CD8-positive, alpha-beta memory T cell (primary cell): ENCODE measurements at regions of chr2 and their contacts with region 1.

Region 1: DNA sequence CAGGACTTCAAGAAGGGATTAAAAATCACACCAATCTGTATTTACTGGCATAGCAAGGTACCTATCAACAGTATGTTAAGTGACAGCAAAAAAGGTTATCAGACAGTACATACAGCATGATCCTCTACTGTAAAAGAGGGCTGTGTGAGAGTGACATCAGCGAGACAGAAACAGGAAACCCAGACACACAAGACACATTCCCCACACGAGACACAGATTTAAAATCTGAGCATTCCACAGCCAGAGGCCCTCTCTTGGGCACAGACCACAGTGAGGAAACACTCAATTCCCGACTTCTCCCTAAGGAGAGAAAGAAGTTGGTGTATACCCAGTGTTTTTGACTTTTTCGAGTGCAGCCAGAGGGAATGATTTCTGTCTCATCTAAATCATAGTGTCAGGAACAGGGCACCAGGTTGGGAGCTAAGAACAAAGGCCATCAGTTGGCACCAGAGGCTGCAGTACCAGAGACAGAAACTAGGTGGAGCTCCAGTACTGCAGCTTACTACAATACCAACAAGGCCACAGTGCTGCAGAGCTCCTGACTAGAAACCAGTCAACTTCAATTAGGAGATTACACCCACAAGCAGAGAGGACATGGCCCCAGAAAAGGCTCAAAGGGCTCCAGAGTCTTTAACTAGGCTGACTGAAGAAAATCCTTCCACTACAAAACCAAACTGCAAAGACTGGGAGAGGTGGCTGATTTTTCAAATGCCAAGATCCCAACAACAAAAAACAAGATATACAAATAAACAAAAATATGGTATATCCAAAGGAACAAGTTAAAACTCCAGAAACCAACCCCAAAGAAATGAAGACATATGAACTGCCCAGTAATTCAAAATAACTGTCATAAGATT is 41.0 kb downstream of the UNC50 start:
- DNase-seq: peak; percentile 70 to 82 (median 74)
- H3K4me3 ChIP-seq: no peak overlapping the region
- H3K4me3 Mint-ChIP-seq: peak overlapping the region; percentile 3 to 57 (median 12)
- H3K27ac ChIP-seq: no peak overlapping the region
- H3K27ac Mint-ChIP-seq: peak overlapping the region; percentile 55 to 98 (median 86)
- H3K4me1 ChIP-seq: peaks cover 44% of the 10 kb centered on the region
- H3K4me1 Mint-ChIP-seq: peaks cover 50 to 79% (median 57%) of the 10 kb centered on the region in 3 donors
- H3K27me3 ChIP-seq: no peaks in the 10 kb centered on the region
- H3K27me3 Mint-ChIP-seq: no peaks in the 10 kb centered on the region

Region 2: DNA sequence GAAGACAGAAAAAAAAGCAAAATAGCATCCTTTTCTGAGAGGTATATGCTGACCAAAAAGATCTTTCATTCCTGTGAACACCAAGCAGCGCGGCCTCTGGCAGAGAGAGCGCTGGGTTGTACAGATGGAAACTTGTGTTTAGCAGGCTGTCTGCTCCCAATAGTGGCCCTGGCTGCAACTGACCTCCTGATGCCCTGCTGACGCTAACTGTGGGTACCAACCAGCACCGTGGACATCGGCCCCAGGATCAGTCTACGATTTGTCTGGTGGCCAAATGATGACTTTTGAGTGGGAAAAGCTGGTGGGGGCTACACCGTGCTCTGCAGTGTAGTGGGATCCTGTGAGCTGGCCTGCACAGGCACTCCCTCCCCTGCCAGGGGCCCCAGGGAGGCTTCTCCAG is 56.8 kb before region 1 on chr2:
- CTCF ChIA-PET with region 1: no interaction called
- POLR2A ChIA-PET with region 1: no interaction called
- DNase-seq: no peak
- H3K4me3 ChIP-seq: no peak overlapping the region
- H3K4me3 Mint-ChIP-seq: no peak overlapping the region
- H3K27ac ChIP-seq: no peak overlapping the region
- H3K27ac Mint-ChIP-seq: no peak overlapping the region
- H3K4me1 ChIP-seq: no peaks in the 10 kb centered on the region
- H3K4me1 Mint-ChIP-seq: peaks cover 14 to 21% (median 16%) of the 10 kb centered on the region in 3 donors
- H3K27me3 ChIP-seq: no peaks in the 10 kb centered on the region
- H3K27me3 Mint-ChIP-seq: no peaks in the 10 kb centered on the region

Region 3: DNA sequence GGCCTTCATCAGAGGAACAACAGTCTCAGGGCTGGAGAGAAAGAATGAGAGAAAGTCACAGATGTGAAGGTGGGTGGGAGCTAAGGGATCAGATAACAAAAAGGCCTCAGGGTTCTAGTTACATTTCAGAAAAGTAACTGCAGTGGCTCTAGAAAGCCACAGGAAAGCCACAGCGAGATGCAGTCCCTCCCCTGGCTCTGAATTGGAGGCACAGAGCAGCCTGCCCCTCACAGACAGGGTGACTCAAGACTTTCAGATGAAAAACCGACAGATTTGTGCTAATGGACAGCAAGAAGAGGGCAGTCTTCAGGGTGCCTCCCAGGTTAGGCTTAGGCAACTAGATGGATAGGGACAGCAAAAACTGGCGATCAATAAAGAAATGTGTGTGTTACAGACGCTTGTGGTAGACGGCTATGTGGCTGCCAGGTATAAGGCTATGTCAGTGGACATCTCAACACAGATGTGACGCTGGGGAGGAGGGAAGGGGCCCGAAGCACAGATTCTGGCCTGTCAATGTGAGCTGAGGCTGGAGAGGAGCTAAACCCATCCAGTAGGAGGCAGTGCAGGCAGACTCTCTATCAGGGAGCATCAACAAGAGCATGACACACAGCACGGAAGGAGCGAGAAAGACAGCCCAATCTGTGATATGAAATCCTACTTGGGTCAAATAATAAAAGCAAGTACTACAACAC is 14.8 kb before region 1 on chr2:
- CTCF ChIA-PET with region 1: interaction called, 10 read pairs
- POLR2A ChIA-PET with region 1: no interaction called
- DNase-seq: peak in 4 of 5 donors; percentile 31 to 70 (median 39)
- H3K4me3 ChIP-seq: no peak overlapping the region
- H3K4me3 Mint-ChIP-seq: peak overlapping the region; percentile 8 to 90 (median 76)
- H3K27ac ChIP-seq: peak overlapping the region; percentile 39
- H3K27ac Mint-ChIP-seq: peak overlapping the region; percentile 86 to 100 (median 98)
- H3K4me1 ChIP-seq: peaks cover 44% of the 10 kb centered on the region
- H3K4me1 Mint-ChIP-seq: peaks cover 46 to 61% (median 55%) of the 10 kb centered on the region in 3 donors
- H3K27me3 ChIP-seq: no peaks in the 10 kb centered on the region
- H3K27me3 Mint-ChIP-seq: no peaks in the 10 kb centered on the region

Region 4: DNA sequence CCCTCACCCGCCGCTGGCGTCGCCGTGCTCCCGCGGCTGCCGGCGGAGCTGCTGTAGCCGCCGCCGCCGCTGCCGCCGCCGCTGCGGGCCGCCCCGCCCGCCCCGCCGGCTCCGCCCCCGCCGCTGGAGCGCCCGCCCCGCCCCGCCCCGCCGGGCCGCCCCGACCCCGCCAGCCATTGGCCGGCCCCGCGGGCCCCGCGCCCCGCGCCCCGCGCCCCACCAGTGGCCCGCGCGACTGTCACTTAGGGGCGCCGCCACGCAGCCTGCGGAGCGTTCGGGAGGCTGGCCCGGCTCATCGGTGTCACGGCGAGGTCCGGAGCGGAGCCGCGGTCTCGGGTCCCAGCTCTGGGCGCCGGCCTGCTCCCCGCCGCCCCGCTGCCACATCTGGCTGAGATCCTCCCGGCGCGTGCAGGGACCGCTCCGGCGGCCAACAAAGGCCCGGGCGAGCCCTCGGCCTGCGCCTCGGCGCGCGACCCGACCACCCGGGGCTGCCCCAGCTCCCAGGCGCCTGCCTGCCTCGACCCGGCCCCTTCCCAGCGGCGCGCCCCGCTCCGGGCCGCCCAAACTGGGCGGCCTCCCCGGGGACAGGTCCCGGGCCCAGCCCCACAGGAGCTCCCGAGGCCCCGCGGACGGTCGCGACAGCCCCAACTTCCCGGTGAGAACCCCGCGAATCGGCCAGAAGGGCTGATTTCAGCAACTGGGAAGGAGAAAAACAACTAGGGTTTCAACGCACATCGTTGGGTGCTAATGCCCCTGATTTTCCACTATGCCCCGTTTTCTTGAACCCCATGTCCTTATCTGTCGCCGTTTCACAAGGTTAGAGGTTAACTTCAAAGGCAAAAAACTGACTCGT is 81.9 kb after region 1 on chr2 and contains the start of gene MGAT4A:
- CTCF ChIA-PET with region 1: interaction called, 30 read pairs
- POLR2A ChIA-PET with region 1: no interaction called
- DNase-seq: peak; percentile 73 to 86 (median 81)
- H3K4me3 ChIP-seq: peak within 1 kb of the TSS; percentile 72
- H3K4me3 Mint-ChIP-seq: peak within 1 kb of the TSS; percentile 93 to 97 (median 95)
- H3K27ac ChIP-seq: peak within 1 kb of the TSS; percentile 81
- H3K27ac Mint-ChIP-seq: peak within 1 kb of the TSS; percentile 79 to 98 (median 95)
- H3K4me1 ChIP-seq: peaks cover 62% of the 10 kb centered on the region
- H3K4me1 Mint-ChIP-seq: peaks cover 64 to 76% (median 72%) of the 10 kb centered on the region in 3 donors
- H3K27me3 ChIP-seq: no peaks in the 10 kb centered on the region
- H3K27me3 Mint-ChIP-seq: no peaks in the 10 kb centered on the region
- total RNA-seq, gene MGAT4A: 65.2 to 66.8 TPM

Region 5: GRCh38 chr2:98822301-98823164 is 173.2 kb after region 1 on chr2:
- CTCF ChIA-PET with region 1: interaction called, 14 read pairs
- POLR2A ChIA-PET with region 1: no interaction called
- DNase-seq: peak; percentile 39 to 71 (median 61)
- H3K4me3 ChIP-seq: no peak overlapping the region
- H3K4me3 Mint-ChIP-seq: peak overlapping the region in 3 of 7 donors; percentile 32 to 87 (median 41)
- H3K27ac ChIP-seq: no peak overlapping the region
- H3K27ac Mint-ChIP-seq: peak overlapping the region in 1 of 8 donors; percentile 33
- H3K4me1 ChIP-seq: peaks cover 5% of the 10 kb centered on the region
- H3K4me1 Mint-ChIP-seq: peaks cover 24 to 69% (median 39%) of the 10 kb centered on the region in 3 donors
- H3K27me3 ChIP-seq: no peaks in the 10 kb centered on the region
- H3K27me3 Mint-ChIP-seq: peaks cover 0 to 6% of the 10 kb centered on the region in 2 donors

Region 6: GRCh38 chr2:98828793-98829371 is 179.5 kb after region 1 on chr2:
- CTCF ChIA-PET with region 1: interaction called, 14 read pairs
- POLR2A ChIA-PET with region 1: no interaction called
- DNase-seq: peak in 3 of 5 donors; percentile 17 to 58 (median 24)
- H3K4me3 ChIP-seq: peak overlapping the region; percentile 15
- H3K4me3 Mint-ChIP-seq: peak overlapping the region in 6 of 7 donors; percentile 7 to 68 (median 58)
- H3K27ac ChIP-seq: no peak overlapping the region
- H3K27ac Mint-ChIP-seq: peak overlapping the region; percentile 21 to 95 (median 87)
- H3K4me1 ChIP-seq: peaks cover 32% of the 10 kb centered on the region
- H3K4me1 Mint-ChIP-seq: peaks cover 56 to 98% (median 83%) of the 10 kb centered on the region in 3 donors
- H3K27me3 ChIP-seq: no peaks in the 10 kb centered on the region
- H3K27me3 Mint-ChIP-seq: peaks cover 0 to 1% of the 10 kb centered on the region in 2 donors

Region 7: DNA sequence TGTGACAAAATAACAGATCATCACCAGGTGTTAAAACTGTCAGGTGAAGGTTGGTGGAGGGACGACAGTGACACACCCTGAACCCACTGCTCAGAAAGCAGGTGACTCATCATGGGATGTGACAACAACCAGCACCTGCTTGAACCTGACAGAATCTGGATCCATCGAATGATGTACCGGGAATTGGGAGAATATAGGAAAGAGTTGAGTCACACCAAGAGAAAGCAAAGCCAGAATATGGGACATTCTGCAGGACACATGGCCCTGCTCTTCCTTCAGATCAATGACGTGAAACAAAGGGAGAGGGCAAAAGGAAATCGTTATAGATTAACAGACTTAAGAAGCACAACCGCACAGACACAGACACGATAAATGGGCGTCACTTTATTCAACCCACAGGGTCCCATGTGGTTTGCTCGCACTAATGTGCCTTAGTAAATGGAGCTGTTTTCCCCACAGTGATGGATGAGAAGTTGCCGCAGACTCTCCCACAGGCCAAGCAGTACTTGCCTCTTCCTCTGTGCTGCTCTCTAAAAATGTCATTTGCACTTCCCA is 186.5 kb after region 1 on chr2:
- CTCF ChIA-PET with region 1: interaction called, 43 read pairs
- POLR2A ChIA-PET with region 1: interaction called, 6 read pairs
- DNase-seq: peak; percentile 50 to 83 (median 82)
- H3K4me3 ChIP-seq: no peak overlapping the region
- H3K4me3 Mint-ChIP-seq: peak overlapping the region; percentile 39 to 70 (median 61)
- H3K27ac ChIP-seq: peak overlapping the region; percentile 32
- H3K27ac Mint-ChIP-seq: peak overlapping the region; percentile 84 to 98 (median 95)
- H3K4me1 ChIP-seq: peaks cover 29% of the 10 kb centered on the region
- H3K4me1 Mint-ChIP-seq: peaks cover 50 to 62% (median 59%) of the 10 kb centered on the region in 3 donors
- H3K27me3 ChIP-seq: no peaks in the 10 kb centered on the region
- H3K27me3 Mint-ChIP-seq: peaks cover 0 to 3% of the 10 kb centered on the region in 2 donors